Naive thymus-derived CD4-positive, alpha-beta T cell (primary cell): ENCODE measurements at regions of chr10 and their contacts with region 1.

Region 1: GRCh38 chr10:110918643-110919363 is at the start of gene BBIP1:
- DNase-seq: peak in 4 of 9 donors; percentile 70 to 98 (median 90)
- ATAC-seq: peak; percentile 96
- H3K4me3 ChIP-seq: peak within 1 kb of the TSS; percentile 97
- H3K4me3 Mint-ChIP-seq: peak within 1 kb of the TSS; percentile 86 to 100 (median 98)
- H3K27ac ChIP-seq: peak within 1 kb of the TSS; percentile 100
- H3K27ac Mint-ChIP-seq: peak within 1 kb of the TSS; percentile 97 to 100 (median 99)
- H3K4me1 ChIP-seq: peaks cover 7 to 17% of the 10 kb centered on the region in 2 donors
- H3K4me1 Mint-ChIP-seq: peaks cover 24 to 66% (median 59%) of the 10 kb centered on the region in 7 donors
- H3K27me3 ChIP-seq: no peaks in the 10 kb centered on the region
- H3K27me3 Mint-ChIP-seq: no peaks in the 10 kb centered on the region
- total RNA-seq, gene BBIP1: 22.2 to 64.2 (median 44.6) TPM

Region 2: DNA sequence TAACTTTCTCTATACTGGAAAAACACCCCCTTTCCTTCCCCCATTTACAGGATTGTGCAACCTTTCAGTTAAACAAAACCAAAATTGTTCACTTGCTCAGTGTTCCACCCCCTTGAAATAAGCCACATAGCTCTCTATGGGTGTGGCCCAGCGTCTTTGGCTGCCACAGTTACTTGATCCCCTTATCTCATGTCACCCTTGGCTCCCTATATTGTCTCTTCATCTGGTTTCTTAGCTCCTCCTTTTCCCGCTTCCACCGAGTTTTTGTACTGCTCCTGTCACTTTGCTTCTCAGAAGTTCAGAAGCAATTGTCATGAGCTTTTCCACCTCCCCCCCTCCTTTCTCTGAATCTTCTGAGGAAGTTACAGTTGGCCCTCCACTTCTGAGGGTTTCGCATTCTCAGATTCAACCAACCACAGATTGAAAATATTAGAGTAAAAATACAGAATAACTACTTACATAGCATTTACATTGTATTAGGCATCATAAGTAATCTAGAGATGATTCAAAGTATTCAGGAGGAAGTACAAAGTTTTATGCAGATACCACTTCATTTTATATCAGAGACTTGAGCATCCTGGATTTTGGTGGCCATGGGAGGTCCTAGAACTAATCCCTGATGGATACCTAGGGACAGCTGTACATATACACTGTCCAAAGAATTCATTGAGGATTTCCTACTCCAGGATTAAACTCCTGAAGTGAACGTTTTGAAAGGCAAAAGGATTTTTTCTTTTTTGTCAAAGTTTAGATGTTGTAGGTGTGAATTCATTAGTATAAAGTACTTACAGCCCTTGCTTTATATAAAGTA is 850.6 kb before region 1 on chr10:
- CTCF ChIA-PET with region 1: no interaction called
- POLR2A ChIA-PET with region 1: no interaction called
- intact Hi-C with region 1: loop called in 1 of 2 experiments (anchors 2 kb)
- DNase-seq: peak in 7 of 9 donors; percentile 40 to 69 (median 52)
- ATAC-seq: peak; percentile 92
- H3K4me3 ChIP-seq: peak overlapping the region; percentile 18
- H3K4me3 Mint-ChIP-seq: peak overlapping the region; percentile 39 to 91 (median 78)
- H3K27ac ChIP-seq: peak overlapping the region; percentile 57
- H3K27ac Mint-ChIP-seq: peak overlapping the region; percentile 83 to 96 (median 92)
- H3K4me1 ChIP-seq: peaks cover 76 to 84% of the 10 kb centered on the region in 2 donors
- H3K4me1 Mint-ChIP-seq: peaks cover 65 to 100% (median 95%) of the 10 kb centered on the region in 7 donors
- H3K27me3 ChIP-seq: no peaks in the 10 kb centered on the region
- H3K27me3 Mint-ChIP-seq: no peaks in the 10 kb centered on the region

Region 3: GRCh38 chr10:110354322-110354766 is 564.5 kb before region 1 on chr10:
- CTCF ChIA-PET with region 1: no interaction called
- POLR2A ChIA-PET with region 1: no interaction called
- intact Hi-C with region 1: loop called in 1 of 2 experiments (anchors 2 kb)
- DNase-seq: peak in 8 of 9 donors; percentile 49 to 75 (median 58)
- ATAC-seq: peak; percentile 73
- H3K4me3 ChIP-seq: no peak overlapping the region
- H3K4me3 Mint-ChIP-seq: peak overlapping the region in 6 of 10 donors; percentile 17 to 48 (median 25)
- H3K27ac ChIP-seq: no peak overlapping the region
- H3K27ac Mint-ChIP-seq: peak overlapping the region in 7 of 9 donors; percentile 14 to 97 (median 53)
- H3K4me1 ChIP-seq: peaks cover 43 to 47% of the 10 kb centered on the region in 2 donors
- H3K4me1 Mint-ChIP-seq: peaks cover 33 to 57% (median 50%) of the 10 kb centered on the region in 7 donors
- H3K27me3 ChIP-seq: no peaks in the 10 kb centered on the region
- H3K27me3 Mint-ChIP-seq: no peaks in the 10 kb centered on the region

Region 4: GRCh38 chr10:110746254-110746826 is 172.5 kb before region 1 on chr10:
- CTCF ChIA-PET with region 1: no interaction called
- POLR2A ChIA-PET with region 1: interaction called, 4 read pairs
- intact Hi-C with region 1: loop called (anchors 1 kb)
- DNase-seq: peak in 8 of 9 donors; percentile 31 to 56 (median 46)
- ATAC-seq: peak; percentile 55
- H3K4me3 ChIP-seq: no peak overlapping the region
- H3K4me3 Mint-ChIP-seq: no peak overlapping the region
- H3K27ac ChIP-seq: no peak overlapping the region
- H3K27ac Mint-ChIP-seq: peak overlapping the region in 8 of 9 donors; percentile 51 to 94 (median 88)
- H3K4me1 ChIP-seq: peaks cover 5 to 47% of the 10 kb centered on the region in 2 donors
- H3K4me1 Mint-ChIP-seq: peaks cover 23 to 95% (median 87%) of the 10 kb centered on the region in 7 donors
- H3K27me3 ChIP-seq: no peaks in the 10 kb centered on the region
- H3K27me3 Mint-ChIP-seq: no peaks in the 10 kb centered on the region

Region 5: GRCh38 chr10:110864662-110865140 is 54.1 kb before region 1 on chr10:
- CTCF ChIA-PET with region 1: interaction called, 3 read pairs
- POLR2A ChIA-PET with region 1: interaction called, 6 read pairs
- intact Hi-C with region 1: loop called (anchors 2 kb)
- DNase-seq: peak in 7 of 9 donors; percentile 73 to 92 (median 88)
- ATAC-seq: peak; percentile 81
- H3K4me3 ChIP-seq: peak overlapping the region; percentile 46
- H3K4me3 Mint-ChIP-seq: peak overlapping the region; percentile 72 to 88 (median 80)
- H3K27ac ChIP-seq: peak overlapping the region; percentile 100
- H3K27ac Mint-ChIP-seq: peak overlapping the region; percentile 92 to 100 (median 99)
- H3K4me1 ChIP-seq: peaks cover 97 to 98% of the 10 kb centered on the region in 2 donors
- H3K4me1 Mint-ChIP-seq: peaks cover 81 to 100% (median 98%) of the 10 kb centered on the region in 7 donors
- H3K27me3 ChIP-seq: no peaks in the 10 kb centered on the region
- H3K27me3 Mint-ChIP-seq: no peaks in the 10 kb centered on the region

Region 6: DNA sequence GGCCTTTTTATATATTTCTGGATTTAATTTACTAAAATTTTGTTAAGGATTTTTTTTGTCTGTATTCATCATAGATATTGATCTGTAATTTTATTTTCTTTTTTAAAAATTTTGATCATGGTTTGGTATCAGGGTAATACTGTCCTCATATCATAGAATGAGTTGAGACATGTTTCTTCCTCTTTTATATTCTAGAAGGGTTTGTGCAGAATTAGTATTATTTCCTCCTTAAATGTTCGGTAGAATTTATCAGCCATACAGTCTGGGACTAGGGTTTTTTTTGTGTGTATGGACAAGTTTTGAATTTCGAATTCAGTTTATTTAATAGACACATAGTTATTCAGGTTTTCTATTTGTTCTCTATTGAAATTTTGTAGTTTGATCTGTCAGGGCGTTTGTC is 54.6 kb after region 1 on chr10:
- CTCF ChIA-PET with region 1: interaction called, 3 read pairs
- POLR2A ChIA-PET with region 1: interaction called, 3 read pairs
- intact Hi-C with region 1: loop called in 1 of 2 experiments (anchors 5 kb)
- DNase-seq: no peak
- ATAC-seq: no peak
- H3K4me3 ChIP-seq: no peak overlapping the region
- H3K4me3 Mint-ChIP-seq: peak overlapping the region in 4 of 10 donors; percentile 3 to 29 (median 12)
- H3K27ac ChIP-seq: no peak overlapping the region
- H3K27ac Mint-ChIP-seq: peak overlapping the region in 1 of 9 donors; percentile 34
- H3K4me1 ChIP-seq: peaks cover 0 to 9% of the 10 kb centered on the region in 2 donors
- H3K4me1 Mint-ChIP-seq: peaks cover 14 to 75% (median 71%) of the 10 kb centered on the region in 7 donors
- H3K27me3 ChIP-seq: no peaks in the 10 kb centered on the region
- H3K27me3 Mint-ChIP-seq: no peaks in the 10 kb centered on the region

Region 7: DNA sequence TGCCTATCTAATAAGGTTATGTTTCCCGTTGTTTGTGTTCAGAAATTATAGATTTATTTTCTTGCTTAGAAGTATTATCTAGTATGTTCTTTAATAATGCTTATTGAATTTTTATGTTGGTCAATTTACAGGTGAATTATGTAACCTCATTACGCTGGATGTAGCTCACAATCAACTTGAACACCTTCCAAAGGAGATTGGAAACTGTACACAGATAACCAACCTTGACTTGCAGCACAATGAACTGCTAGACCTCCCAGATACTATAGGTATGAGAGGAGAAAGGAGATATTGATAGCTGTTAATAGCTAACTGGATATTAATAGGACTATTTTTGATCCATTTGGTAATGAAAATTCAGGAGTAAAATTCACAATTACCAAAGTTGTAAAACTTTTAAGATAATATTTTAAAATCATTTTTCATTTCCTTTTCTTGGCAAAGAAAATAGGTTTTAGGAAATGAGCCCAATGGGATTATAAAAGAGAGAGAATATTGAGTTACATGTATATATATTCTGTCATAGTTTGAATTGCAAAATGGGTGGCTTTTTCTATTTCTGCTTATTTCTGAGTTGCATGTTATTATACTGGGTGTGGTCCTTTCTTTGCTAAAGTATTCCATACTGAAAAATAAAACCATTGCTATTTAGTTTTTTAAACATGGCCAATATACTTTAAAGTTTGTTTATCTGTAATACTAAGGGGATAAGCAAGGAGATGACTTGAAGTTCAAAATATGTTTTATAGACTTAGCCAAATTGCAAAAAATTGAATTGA is 66.9 kb after region 1 on chr10:
- CTCF ChIA-PET with region 1: no interaction called
- POLR2A ChIA-PET with region 1: no interaction called
- intact Hi-C with region 1: no loop called
- DNase-seq: no peak
- ATAC-seq: no peak
- H3K4me3 ChIP-seq: no peak overlapping the region
- H3K4me3 Mint-ChIP-seq: no peak overlapping the region
- H3K27ac ChIP-seq: no peak overlapping the region
- H3K27ac Mint-ChIP-seq: peak overlapping the region in 1 of 9 donors; percentile 21
- H3K4me1 ChIP-seq: peaks cover 0 to 2% of the 10 kb centered on the region in 2 donors
- H3K4me1 Mint-ChIP-seq: peaks cover 12 to 53% (median 41%) of the 10 kb centered on the region in 7 donors
- H3K27me3 ChIP-seq: no peaks in the 10 kb centered on the region
- H3K27me3 Mint-ChIP-seq: no peaks in the 10 kb centered on the region

Region 8: GRCh38 chr10:112446855-112447711 is 1528.3 kb after region 1 on chr10 and contains the starts of genes VTI1A and ZDHHC6:
- CTCF ChIA-PET with region 1: no interaction called
- POLR2A ChIA-PET with region 1: no interaction called
- intact Hi-C with region 1: loop called in 1 of 2 experiments (anchors 5 kb)
- DNase-seq: peak; percentile 70 to 89 (median 84)
- ATAC-seq: peak; percentile 95
- H3K4me3 ChIP-seq: peak within 1 kb of the TSS; percentile 85
- H3K4me3 Mint-ChIP-seq: peak within 1 kb of the TSS; percentile 92 to 100 (median 96)
- H3K27ac ChIP-seq: peak within 1 kb of the TSS; percentile 90
- H3K27ac Mint-ChIP-seq: peak within 1 kb of the TSS; percentile 95 to 100 (median 99)
- H3K4me1 ChIP-seq: peaks cover 23 to 25% of the 10 kb centered on the region in 2 donors
- H3K4me1 Mint-ChIP-seq: peaks cover 31 to 81% (median 65%) of the 10 kb centered on the region in 7 donors
- H3K27me3 ChIP-seq: no peaks in the 10 kb centered on the region
- H3K27me3 Mint-ChIP-seq: no peaks in the 10 kb centered on the region
- total RNA-seq, gene VTI1A: 40.2 to 56.8 (median 51.4) TPM
- total RNA-seq, gene ZDHHC6: 34.3 to 66.3 (median 50.9) TPM